Motor neuron (in vitro differentiated cells): ENCODE measurements at regions of chr2 and their contacts with region 1.

Region 1: GRCh38 chr2:4762951-4763376 is 929.2 kb upstream of the SOX11 start:
- ATAC-seq: peak in 6 of 8 experiments; percentile 47 to 94 (median 88)
- H3K4me3 ChIP-seq: no peak overlapping the region
- H3K27ac ChIP-seq: no peak overlapping the region
- H3K4me1 ChIP-seq: peaks cover 3 to 10% of the 10 kb centered on the region in 2 donors

Region 2: GRCh38 chr2:3728104-3729054 is 1034.6 kb before region 1 on chr2:
- in situ Hi-C with region 1: loop called in 1 of 9 experiments (anchors 25 kb)
- ATAC-seq: peak; percentile 47 to 94 (median 90)
- H3K4me3 ChIP-seq: peak overlapping the region in 1 of 5 donors; percentile 7
- H3K27ac ChIP-seq: peak overlapping the region in 1 of 2 donors; percentile 19
- H3K4me1 ChIP-seq: peaks cover 16 to 22% of the 10 kb centered on the region in 2 donors

Region 3: DNA sequence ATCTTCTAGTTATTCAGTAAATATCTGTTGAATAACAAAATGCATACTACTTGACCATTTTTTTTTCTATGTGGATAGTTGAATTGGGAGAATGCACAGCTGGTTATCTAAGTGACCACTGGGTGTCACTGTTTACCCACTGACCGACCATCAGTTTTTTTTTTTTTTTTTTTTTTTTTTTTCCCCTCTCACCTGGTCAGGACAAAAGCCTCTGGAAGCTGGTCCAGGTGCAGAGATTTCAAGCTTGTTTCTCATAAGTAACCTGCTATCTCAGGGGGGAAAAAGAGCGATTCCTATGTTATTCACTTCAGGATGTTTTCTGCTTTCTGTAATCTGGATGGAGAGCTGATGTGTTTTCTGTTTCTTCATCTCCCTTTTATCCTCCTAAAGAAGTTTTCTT is 803.6 kb before region 1 on chr2:
- in situ Hi-C with region 1: loop called in 1 of 9 experiments (anchors 25 kb)
- ATAC-seq: peak in 7 of 8 experiments; percentile 19 to 55 (median 42)
- H3K4me3 ChIP-seq: no peak overlapping the region
- H3K27ac ChIP-seq: no peak overlapping the region
- H3K4me1 ChIP-seq: peaks cover 6 to 24% of the 10 kb centered on the region in 2 donors

Region 4: DNA sequence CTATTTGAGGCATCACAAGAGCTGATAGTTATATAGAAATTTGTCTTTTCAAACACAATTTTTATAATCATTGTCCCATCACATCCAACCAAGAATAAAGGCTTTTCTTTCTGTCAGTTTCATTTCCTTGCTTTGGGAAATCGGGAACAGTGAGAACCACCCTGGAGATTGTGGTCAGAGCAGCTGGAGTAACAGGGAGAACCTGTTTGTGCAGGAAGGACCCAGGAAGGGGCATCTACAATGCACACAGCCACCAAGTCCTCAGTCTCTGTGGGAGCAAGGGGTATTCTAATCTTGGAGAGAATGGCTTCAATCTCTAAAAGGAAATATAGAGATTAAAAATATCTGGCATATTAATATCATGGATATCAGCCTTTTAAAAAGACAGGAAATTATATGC is 193.0 kb after region 1 on chr2:
- in situ Hi-C with region 1: no loop called
- ATAC-seq: no peak
- H3K4me3 ChIP-seq: no peak overlapping the region
- H3K27ac ChIP-seq: no peak overlapping the region
- H3K4me1 ChIP-seq: peaks cover 0 to 5% of the 10 kb centered on the region in 2 donors